Mucosa of descending colon (tissue), 3 donors: ENCODE measurements at regions of chr17 and their contacts with region 1.

Region 1: GRCh38 chr17:45584092-45585036 is 93.8 kb upstream of the PLEKHM1 start:
- DNase-seq: peak; percentile 74 to 92 (median 83)
- ATAC-seq: peak; percentile 79
- H3K4me3 ChIP-seq: peak overlapping the region; percentile 51
- H3K4me1 ChIP-seq: peaks cover 10% of the 10 kb centered on the region
- CTCF ChIP-seq: no peak

Region 2: DNA sequence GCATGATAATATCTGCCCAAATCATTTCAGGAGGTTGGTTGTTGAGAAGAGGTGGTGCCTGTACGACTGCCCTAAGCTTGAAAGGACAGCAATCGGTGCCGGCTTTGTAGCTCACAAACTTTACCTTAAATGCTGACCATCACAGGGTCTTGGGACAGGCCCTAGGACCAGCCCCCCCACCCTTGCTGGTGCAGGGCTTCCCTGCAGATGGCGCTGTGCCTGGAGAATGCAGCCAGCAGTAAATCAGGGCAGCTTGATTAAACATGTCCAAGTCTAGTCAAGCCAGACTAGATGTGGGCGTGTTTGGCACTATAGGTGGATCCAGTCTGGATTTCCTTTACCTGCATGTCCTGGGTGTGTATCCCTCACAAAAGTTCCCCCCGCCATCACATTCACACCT is 64.3 kb after region 1 on chr17:
- intact Hi-C with region 1: no loop called
- DNase-seq: no peak
- ATAC-seq: no peak
- H3K4me3 ChIP-seq: no peak overlapping the region
- H3K4me1 ChIP-seq: no peaks in the 10 kb centered on the region
- CTCF ChIP-seq: no peak

Region 3: DNA sequence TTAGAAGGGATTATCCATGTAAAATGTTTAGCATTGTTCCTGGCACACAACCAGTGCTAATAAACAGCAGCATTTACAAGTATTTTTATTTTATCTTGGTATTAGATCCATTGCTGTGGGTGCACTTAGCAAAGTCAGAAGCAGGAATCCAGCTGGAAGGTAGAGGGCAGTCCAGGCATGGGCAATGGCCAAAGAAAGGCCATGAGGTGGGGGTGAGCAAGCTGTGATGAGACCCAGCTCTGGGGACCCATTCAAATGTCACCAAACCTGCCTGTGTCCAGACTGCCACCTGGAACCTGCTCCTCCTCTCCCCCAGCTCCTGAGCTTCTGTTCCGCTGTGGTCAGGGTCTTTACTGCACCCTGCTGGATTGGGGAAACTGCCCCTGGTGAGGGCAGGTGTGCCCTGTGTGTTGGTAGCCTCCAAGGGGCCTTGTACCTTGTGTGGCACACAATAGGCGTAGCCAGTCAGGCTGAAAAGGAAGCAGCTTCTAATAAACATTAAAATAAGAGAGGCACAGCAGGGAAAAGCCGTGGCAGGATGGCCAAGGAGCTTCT is 81.8 kb after region 1 on chr17:
- intact Hi-C with region 1: no loop called
- DNase-seq: no peak
- ATAC-seq: no peak
- H3K4me3 ChIP-seq: no peak overlapping the region
- H3K4me1 ChIP-seq: no peaks in the 10 kb centered on the region
- CTCF ChIP-seq: no peak

Region 4: DNA sequence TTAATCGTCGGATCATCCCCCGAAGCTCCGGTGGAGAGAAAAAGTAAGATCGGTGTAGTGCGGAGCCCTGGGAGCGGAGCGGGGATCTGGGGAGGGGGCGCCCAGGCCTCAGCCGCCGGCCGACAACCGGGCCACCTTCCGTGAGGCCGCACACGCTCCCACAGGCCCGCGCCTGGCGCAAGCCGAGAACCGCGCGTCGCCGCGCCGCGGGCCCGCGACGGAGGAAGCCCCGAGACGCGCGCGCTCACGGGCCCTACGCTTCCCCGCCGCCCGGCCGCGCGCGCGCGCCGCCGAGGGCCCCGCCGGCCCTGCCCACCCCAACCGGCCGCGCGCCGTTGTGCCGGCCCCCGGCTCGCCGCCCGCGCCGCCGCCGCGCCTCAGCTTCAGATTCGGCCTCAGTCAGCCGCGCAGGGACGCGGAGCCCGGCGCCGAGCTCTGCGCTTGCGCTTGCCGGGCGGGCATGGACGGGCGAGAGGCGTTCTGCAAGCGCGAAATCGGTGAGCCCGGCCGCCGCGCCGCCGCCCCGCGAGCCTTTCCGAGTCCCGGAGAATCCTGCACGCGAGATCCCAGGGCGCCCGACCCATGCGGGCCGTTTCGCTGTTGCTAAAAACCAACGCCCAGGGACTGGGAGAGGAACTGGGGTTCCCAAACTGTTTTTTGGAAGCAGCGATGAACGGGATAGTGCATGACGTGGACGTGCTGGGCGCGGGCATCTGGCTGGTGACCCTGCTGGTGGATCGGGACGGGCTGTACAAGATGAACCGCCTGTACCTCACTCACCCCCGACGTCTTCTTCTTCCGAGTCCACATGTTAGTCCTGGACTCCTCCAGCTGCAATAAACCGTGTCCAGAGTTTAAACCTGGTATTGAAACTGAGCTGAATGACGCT is 682.5 kb after region 1 on chr17:
- intact Hi-C with region 1: loop called in 1 of 2 experiments (anchors 10 kb)
- DNase-seq: peak; percentile 83 to 92 (median 91)
- ATAC-seq: peak; percentile 93
- H3K4me3 ChIP-seq: peak overlapping the region; percentile 33
- H3K4me1 ChIP-seq: no peaks in the 10 kb centered on the region
- CTCF ChIP-seq: no peak